A549 (cell line): ENCODE measurements at regions of chr20 and their contacts with region 1.

Region 1: DNA sequence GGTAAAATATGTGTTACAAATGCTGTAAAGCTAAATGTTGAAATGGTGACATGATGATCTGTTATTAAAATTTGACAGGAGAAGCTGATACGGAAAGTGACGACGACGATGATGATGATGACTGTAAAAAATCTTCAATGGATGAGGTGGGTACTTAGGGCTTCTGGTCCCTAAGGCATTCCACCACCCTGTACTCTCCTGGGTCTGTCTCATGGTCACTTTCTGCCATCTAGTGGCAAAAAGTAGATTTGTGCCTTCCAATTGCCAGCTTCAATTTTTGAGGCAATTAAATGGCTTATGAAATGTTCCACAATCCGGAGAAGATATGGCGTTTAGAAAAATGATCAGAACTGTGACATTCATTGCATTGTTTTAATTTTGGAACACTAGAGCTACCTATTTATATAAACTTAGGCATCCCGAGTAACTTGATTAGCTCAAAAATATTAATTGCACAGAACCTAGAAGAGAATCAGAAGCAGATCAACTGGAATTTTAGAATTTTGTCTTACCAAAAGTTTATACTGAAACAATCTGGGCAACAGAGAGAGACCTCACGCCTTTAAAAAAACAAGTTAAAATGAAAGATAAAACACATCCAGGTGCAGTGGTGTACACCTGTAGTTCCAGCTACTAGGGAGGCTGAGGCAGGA is 346.5 kb upstream of the PLCB4 start:
- DNase-seq: peak; percentile 37 to 80
- ATAC-seq: peak; percentile 91 to 97
- H3K4me3 ChIP-seq: no peak overlapping the region
- H3K27ac ChIP-seq: no peak overlapping the region
- H3K4me1 ChIP-seq: no peaks in the 10 kb centered on the region
- CTCF ChIP-seq: peak; percentile 97
- EP300 ChIP-seq: no peak
- POLR2A ChIP-seq: no peak
- RAD21 ChIP-seq: peak; percentile 95 to 97

Region 2: GRCh38 chr20:7926767-7927166 is 795.6 kb before region 1 on chr20:
- CTCF ChIA-PET with region 1: interaction called, 23 read pairs
- POLR2A ChIA-PET with region 1: no interaction called
- DNase-seq: peak in 1 of 2 experiments; percentile 44
- ATAC-seq: no peak; a peak in 1 of 6 replicates
- H3K4me3 ChIP-seq: no peak overlapping the region
- H3K27ac ChIP-seq: no peak overlapping the region
- H3K4me1 ChIP-seq: no peaks in the 10 kb centered on the region
- CTCF ChIP-seq: peak; percentile 69
- EP300 ChIP-seq: no peak
- POLR2A ChIP-seq: no peak
- RAD21 ChIP-seq: peak; percentile 70 to 72

Region 3: DNA sequence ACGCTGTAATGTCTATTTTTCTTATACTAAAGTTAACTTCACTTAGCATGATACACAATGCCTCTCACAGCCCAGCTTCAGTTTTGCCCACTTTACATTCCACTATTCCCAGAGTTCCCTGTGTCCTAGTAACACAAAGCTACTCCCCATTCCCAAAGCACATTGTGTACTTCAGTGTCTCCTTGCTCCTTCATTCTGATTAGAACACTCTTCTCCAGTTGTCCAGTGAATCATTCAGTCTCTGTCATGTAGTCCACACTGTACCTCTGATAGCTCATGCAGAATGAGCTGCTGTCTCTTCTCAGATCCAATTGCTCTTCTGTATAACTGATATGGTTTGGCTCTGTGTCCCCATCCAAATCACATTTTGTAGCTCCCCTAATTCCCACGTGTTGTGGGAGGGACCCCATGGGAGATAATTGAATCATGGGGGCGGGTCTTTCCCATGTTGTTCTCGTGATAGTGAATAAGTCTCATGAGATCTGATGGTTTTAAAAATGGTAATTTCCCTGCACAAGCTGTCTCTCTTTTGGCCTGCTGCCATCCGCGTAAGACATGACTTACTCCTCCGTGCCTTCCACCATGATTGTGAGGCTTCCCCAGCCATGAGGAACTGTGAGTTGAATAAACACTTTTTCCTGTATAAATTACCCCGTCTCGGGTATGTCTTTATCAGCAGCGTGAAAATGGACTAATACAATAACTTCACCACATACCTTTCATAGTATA is 700.7 kb before region 1 on chr20:
- CTCF ChIA-PET with region 1: interaction called, 13 read pairs
- POLR2A ChIA-PET with region 1: no interaction called
- DNase-seq: no peak
- ATAC-seq: no peak
- H3K4me3 ChIP-seq: no peak overlapping the region
- H3K27ac ChIP-seq: no peak overlapping the region
- H3K4me1 ChIP-seq: peaks cover 9% of the 10 kb centered on the region
- CTCF ChIP-seq: no peak
- EP300 ChIP-seq: no peak
- POLR2A ChIP-seq: no peak
- RAD21 ChIP-seq: no peak

Region 4: GRCh38 chr20:8049310-8049709 is 673.1 kb before region 1 on chr20:
- CTCF ChIA-PET with region 1: interaction called, 128 read pairs
- POLR2A ChIA-PET with region 1: no interaction called
- DNase-seq: no peak
- ATAC-seq: no peak
- H3K4me3 ChIP-seq: no peak overlapping the region
- H3K27ac ChIP-seq: no peak overlapping the region
- H3K4me1 ChIP-seq: peaks cover 5% of the 10 kb centered on the region; the same call in 1 of the 3 replicates
- CTCF ChIP-seq: no peak
- EP300 ChIP-seq: no peak
- POLR2A ChIP-seq: no peak
- RAD21 ChIP-seq: no peak

Region 5: GRCh38 chr20:8667306-8667705 is 55.1 kb before region 1 on chr20:
- CTCF ChIA-PET with region 1: interaction called, 12 read pairs
- POLR2A ChIA-PET with region 1: no interaction called
- DNase-seq: no peak
- ATAC-seq: no peak
- H3K4me3 ChIP-seq: no peak overlapping the region
- H3K27ac ChIP-seq: no peak overlapping the region
- H3K4me1 ChIP-seq: no peaks in the 10 kb centered on the region
- CTCF ChIP-seq: no peak
- EP300 ChIP-seq: no peak
- POLR2A ChIP-seq: no peak
- RAD21 ChIP-seq: no peak

Region 6: GRCh38 chr20:8709627-8710026 is 12.8 kb before region 1 on chr20:
- CTCF ChIA-PET with region 1: interaction called, 94 read pairs
- POLR2A ChIA-PET with region 1: no interaction called
- DNase-seq: no peak
- ATAC-seq: no peak
- H3K4me3 ChIP-seq: no peak overlapping the region
- H3K27ac ChIP-seq: no peak overlapping the region
- H3K4me1 ChIP-seq: no peaks in the 10 kb centered on the region
- CTCF ChIP-seq: no peak
- EP300 ChIP-seq: no peak
- POLR2A ChIP-seq: no peak
- RAD21 ChIP-seq: no peak

Region 7: DNA sequence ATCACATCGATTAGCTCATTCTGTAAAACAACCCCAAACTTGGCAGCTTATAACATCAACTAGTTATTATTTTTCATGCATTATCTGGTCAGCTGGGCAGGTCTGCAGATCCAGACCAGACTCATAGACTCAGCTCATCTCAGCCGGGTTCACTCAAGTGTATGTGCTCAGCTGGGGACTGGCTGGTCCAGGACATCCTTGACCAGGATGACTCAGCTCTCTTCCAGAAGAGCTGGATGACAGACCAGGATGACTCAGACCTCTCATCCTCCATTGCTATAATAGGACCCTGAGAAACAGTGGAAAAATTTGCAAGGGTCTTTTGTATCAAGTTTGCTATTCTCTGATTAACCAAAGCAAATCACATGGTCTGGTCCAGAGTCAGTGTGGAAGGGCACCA is 34.0 kb after region 1 on chr20:
- CTCF ChIA-PET with region 1: interaction called, 10 read pairs
- POLR2A ChIA-PET with region 1: no interaction called
- DNase-seq: peak; percentile 87 to 93
- ATAC-seq: peak; percentile 96
- H3K4me3 ChIP-seq: no peak overlapping the region
- H3K27ac ChIP-seq: peak overlapping the region; percentile 65 to 78
- H3K4me1 ChIP-seq: peaks cover 21% of the 10 kb centered on the region
- CTCF ChIP-seq: no peak
- EP300 ChIP-seq: 0 out of 5 replicates have a peak, but pooled peaks of 1 of the 2 experiments have one; percentile 9
- POLR2A ChIP-seq: no peak
- RAD21 ChIP-seq: no peak

Region 8: GRCh38 chr20:9021701-9022103 is 299.3 kb after region 1 on chr20:
- CTCF ChIA-PET with region 1: no interaction called
- POLR2A ChIA-PET with region 1: no interaction called
- DNase-seq: peak in 1 of 2 experiments; percentile 50
- ATAC-seq: peak; percentile 49 to 69; a peak in 4 of 6 replicates
- H3K4me3 ChIP-seq: no peak overlapping the region
- H3K27ac ChIP-seq: peak overlapping the region in 1 of 2 experiments; percentile 55; a peak in 3 of 6 replicates
- H3K4me1 ChIP-seq: peaks cover 26% of the 10 kb centered on the region
- CTCF ChIP-seq: no peak
- EP300 ChIP-seq: no peak
- POLR2A ChIP-seq: no peak
- RAD21 ChIP-seq: no peak